RWPE1 (cell line): ENCODE measurements at regions of chr11 and their contacts with region 1.

Region 1: DNA sequence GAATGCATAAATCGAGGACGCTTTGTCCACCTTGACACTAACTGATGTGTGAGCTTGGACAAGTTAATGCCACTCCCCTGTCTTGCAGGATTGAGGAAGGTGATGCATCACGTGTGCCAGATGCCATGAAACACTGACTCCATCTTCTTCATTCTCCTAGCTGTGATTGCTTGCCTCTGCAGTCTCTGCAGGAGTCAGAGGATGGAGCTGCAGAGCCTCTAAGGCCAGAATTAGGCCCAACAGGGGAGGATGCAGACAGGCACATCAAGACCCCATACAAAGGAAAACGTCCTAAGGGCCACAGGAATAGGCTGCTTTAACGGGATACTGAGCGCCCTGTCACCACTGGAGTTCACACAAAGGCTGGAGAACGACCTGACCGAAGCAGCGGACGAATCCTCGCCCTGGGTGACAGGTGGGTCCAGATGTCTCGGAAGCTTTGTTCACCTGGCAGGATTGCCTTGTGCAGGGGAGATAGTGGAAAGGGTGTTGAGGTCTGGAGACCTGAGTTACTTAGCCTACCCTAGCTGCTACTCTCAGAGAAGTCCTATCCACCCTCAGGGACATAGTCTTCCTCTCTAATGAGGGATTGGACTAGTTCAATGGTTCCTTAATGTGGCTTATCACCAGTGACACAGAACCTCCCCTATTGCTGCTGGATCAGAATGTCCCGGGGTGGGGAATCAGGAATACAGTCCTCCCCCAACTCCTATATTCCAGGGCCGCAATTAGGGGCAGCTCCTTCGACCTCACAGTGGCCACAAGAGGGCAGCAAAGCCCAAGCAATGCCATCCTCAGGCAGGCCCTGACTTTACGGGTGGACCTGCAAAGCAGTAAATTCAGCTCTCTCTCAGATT is 32.4 kb downstream of the DBX1 start:
- DNase-seq: peak; percentile 57
- H3K27ac ChIP-seq: no peak overlapping the region
- CTCF ChIP-seq: peak; percentile 85

Region 2: GRCh38 chr11:20112291-20113148 is 15.4 kb before region 1 on chr11:
- CTCF ChIA-PET with region 1: interaction called, 10 read pairs
- POLR2A ChIA-PET with region 1: interaction called, 3 read pairs
- DNase-seq: peak; percentile 95
- H3K27ac ChIP-seq: peak overlapping the region; percentile 99
- CTCF ChIP-seq: no peak

Region 3: DNA sequence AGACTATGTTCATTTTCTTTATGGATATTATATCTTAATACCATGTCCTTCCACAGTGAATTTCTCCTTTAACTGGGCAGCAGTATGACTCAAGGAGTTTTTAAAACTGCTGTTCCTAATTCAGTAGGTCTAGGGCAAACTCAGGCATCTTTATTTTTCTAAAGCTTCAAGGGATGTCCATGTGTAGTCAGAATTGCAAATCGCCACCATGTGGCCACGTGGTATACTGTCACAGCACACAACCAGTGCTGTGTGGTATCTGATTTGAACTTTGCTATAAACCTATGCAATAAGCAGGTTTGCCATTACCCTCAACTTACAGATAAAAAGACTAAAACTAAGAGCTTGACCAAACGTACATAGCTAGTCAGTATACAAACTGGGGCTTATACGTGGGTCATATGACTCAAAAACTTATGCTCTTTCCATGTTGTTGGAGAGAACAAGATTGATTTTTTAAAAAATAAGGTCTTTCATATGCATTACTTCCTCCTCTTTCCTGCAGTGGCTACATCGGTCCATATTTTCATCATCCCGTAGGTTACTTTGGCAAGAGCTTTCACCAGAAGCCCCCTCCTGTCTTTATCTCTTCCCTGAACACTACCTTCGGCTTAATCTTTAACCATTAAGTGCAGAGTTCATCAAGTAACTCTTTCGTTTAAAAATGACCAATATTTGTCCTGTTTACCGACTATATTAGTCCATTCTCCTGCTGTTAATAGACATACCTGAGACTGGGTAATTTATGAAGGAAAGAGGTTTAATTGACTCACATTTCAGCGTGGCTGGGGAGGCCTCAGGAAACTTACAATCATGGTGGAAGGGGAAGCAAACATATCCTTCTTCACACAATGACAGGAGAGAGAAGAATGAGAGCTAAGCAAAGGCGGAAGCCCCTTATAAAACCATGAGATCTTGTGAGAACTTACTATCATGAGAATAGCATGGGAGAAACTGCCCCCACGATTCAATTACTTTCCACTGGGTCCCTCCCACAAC is 227.6 kb after region 1 on chr11:
- CTCF ChIA-PET with region 1: interaction called, 24 read pairs
- POLR2A ChIA-PET with region 1: no interaction called
- DNase-seq: peak; percentile 25
- H3K27ac ChIP-seq: no peak overlapping the region
- CTCF ChIP-seq: peak; percentile 55